ENCODE measurements at regions of chr3 and their contacts with region 1.

Region 1: DNA sequence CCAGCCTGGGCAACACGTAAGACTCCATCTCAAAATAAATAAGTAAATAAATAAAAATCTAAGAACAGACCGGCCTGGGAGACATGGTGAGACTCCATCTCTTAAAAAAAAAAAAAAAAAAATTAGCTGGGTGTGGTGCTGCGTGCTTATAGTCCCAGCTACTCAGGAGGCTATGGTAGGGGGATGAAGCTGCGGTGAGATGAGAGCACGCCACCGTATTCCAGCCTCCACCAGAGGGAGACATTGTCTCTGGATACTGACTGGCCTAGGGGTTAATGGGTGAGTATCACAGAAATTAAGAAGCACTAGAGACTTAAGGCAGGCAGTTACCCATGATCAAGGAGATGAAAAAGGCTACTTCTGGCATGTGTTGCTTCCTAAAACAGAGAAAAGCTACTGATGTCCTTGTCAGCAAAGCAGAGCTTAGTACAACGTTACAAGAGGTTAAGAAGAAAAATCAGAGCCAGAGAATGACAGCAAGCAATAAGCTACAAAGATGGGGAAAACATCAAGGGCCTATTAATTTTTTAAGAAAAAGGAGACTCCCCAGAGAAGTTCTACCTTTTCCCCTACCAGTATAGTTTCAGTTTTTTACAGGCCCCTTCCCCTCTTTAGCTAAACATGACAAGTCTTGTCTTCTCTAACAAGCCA is 8.6 kb downstream of the TFRC start:
- DNase-seq: peak; percentile 23 to 52
- ATAC-seq: peak; percentile 90 to 95
- H3K4me3 ChIP-seq: no peak overlapping the region
- H3K27ac ChIP-seq: peak overlapping the region in 1 of 4 donors; percentile 38
- H3K4me1 ChIP-seq: peaks cover 0 to 10% of the 10 kb centered on the region in 2 donors
- H3K27me3 ChIP-seq: no peaks in the 10 kb centered on the region
- CTCF ChIP-seq: peak; percentile 73 to 84 (median 81)
- POLR2A ChIP-seq: no peak

Region 2: DNA sequence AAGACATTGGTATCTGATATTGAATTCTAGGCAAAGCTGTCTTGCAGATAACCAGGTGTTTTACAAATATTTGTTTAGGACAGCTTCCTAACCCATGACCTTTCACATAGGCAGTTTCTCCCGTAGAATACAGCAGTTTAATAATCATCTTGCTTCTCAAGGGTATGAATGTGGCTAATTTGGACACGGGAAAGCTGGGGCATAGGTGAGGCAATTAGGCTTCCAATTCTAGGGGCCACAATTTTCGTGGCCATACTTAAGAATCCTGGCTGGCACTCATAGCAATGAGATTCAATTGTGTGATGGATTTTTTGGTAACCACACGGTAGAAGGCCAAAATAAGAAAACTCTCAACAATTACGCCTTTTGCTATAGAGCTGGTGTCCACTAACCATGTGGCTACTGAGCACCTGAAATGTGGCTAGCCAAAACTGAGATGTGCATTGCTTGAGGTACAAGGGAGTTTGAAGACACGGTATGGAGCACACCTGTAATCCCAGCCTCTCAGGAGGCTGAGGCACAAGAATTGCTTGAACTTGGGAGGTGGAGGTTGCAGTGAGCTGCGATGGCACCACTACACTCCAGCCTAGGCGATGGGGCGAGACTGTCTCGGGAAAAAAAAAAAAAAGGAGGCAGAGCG is 25.8 kb before region 1 on chr3:
- in situ Hi-C with region 1: no loop called
- intact Hi-C with region 1: no loop called
- DNase-seq: no peak
- ATAC-seq: no peak
- H3K4me3 ChIP-seq: no peak overlapping the region
- H3K27ac ChIP-seq: no peak overlapping the region
- H3K4me1 ChIP-seq: no peaks in the 10 kb centered on the region
- H3K27me3 ChIP-seq: no peaks in the 10 kb centered on the region
- CTCF ChIP-seq: no peak
- POLR2A ChIP-seq: no peak

Region 3: DNA sequence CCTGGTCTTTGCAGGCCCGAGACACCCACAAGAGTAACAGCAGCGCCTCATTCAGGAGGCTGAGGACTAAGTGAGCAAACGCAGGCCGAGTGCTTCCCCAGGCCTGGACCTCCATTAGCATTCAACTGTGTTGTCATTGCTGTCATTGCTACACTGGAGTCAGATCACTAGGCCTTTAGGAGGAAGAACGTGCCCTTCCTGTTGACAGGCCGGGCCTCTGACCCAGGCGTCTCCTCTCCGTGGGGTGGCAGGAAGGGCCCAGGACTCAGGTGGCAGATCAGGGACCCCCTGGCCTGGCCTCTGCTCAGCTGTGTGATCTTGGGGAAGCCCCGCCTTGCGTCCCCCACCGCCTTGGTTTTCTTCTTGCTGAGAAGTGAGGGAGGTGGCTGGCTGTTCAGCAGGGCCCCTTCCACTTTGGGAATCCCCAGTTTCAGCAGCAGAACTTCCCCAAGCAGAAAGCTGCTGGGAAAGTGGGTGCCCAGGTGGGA is 118.8 kb after region 1 on chr3:
- in situ Hi-C with region 1: loop called in 3 of 4 experiments (anchors 5 to 10 kb)
- intact Hi-C with region 1: loop called (anchors 1 kb)
- DNase-seq: no peak
- ATAC-seq: peak in 1 of 2 donors; percentile 22
- H3K4me3 ChIP-seq: no peak overlapping the region
- H3K27ac ChIP-seq: peak overlapping the region; percentile 65 to 84 (median 73)
- H3K4me1 ChIP-seq: peaks cover 14 to 20% of the 10 kb centered on the region in 2 donors
- H3K27me3 ChIP-seq: no peaks in the 10 kb centered on the region
- CTCF ChIP-seq: no peak
- POLR2A ChIP-seq: no peak

Region 4: DNA sequence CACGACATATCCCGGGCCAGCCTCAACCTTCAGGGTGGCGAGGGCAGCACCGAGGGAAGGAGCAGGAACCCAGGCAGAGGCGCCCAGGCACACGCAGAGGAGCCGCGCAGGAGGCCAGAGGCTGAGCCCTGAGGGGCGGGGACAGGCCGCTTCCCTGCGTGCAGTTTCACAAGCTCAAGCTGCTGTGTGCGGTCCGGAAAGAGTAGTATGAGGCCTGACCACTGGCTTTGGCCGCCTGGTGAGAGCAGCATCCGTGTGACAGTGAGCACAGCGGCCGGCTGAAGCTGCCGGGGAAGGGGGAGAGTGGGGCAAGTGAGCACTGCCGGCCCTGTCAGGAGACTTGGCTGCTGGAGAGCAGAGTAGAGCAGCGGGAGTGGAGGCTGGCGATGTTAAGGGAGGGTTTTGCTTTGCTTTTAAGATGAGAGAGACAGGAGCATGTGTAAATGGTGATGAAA is 129.2 kb after region 1 on chr3:
- in situ Hi-C with region 1: loop called in 3 of 4 experiments (anchors 5 to 10 kb)
- intact Hi-C with region 1: no loop called
- DNase-seq: no peak
- ATAC-seq: peak in 1 of 2 donors; percentile 34
- H3K4me3 ChIP-seq: no peak overlapping the region
- H3K27ac ChIP-seq: no peak overlapping the region
- H3K4me1 ChIP-seq: no peaks in the 10 kb centered on the region
- H3K27me3 ChIP-seq: peaks cover 5 to 14% (median 10%) of the 10 kb centered on the region in 3 donors
- CTCF ChIP-seq: no peak
- POLR2A ChIP-seq: no peak

Measured in gastrocnemius medialis (tissue), 4 donors.